ENCODE measurements at regions of chr17 and their contacts with region 1.

Region 1: GRCh38 chr17:19766422-19767270 is 18.5 kb upstream of the ALDH3A1 start:
- DNase-seq: peak; percentile 54 to 88 (median 77)
- ATAC-seq: peak; percentile 93
- H3K4me3 ChIP-seq: no peak overlapping the region
- H3K4me3 Mint-ChIP-seq: peak overlapping the region in 8 of 10 donors; percentile 25 to 73 (median 59)
- H3K27ac ChIP-seq: peak overlapping the region; percentile 33
- H3K27ac Mint-ChIP-seq: peak overlapping the region; percentile 50 to 99 (median 87)
- H3K4me1 ChIP-seq: peaks cover 5 to 43% of the 10 kb centered on the region in 2 donors
- H3K4me1 Mint-ChIP-seq: peaks cover 22 to 63% (median 46%) of the 10 kb centered on the region in 7 donors
- H3K27me3 ChIP-seq: no peaks in the 10 kb centered on the region
- H3K27me3 Mint-ChIP-seq: peaks cover 0 to 3% (median 0%) of the 10 kb centered on the region in 5 donors

Region 2: DNA sequence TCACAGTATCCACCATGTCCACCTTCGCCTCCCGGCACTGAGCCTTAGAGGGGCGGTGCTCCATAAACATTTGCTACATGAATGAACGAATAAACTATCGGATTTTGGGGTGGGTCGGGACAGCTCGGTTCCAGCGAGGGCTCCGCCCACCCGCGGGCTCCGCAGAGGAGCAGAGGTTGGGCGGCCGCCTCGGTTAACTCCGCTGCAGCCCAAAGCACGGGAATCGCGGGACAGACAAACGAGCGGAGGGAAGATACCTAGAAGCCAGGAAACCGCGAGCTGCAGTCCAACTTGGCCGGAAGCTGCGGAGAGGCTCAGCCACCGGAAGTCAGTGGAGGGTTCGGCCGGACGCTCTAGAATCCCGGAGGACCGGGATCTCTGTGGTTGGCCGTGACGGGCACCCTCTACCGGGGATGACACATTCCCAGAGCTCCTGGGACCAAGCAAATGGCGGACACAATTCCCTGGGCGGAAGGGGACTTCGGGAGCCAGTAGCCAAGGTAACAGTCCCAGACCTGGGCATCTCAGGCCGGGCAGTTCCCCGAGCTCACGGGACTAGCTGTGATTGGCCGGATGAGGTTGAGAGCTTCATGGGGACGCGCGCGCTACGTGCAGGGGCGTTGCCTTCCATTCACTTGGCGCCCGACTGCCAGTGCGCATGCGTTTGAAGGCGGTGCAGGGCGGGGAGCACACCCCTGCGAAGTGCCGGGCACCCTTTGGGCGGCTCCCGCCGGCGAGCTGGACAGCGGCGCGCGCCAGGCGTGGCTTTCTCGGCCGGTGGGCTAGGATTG is 388.8 kb before region 1 on chr17:
- CTCF ChIA-PET with region 1: interaction called, 6 read pairs
- POLR2A ChIA-PET with region 1: no interaction called
- intact Hi-C with region 1: loop called in 1 of 2 experiments (anchors 5 kb)
- DNase-seq: peak; percentile 85 to 95 (median 92)
- ATAC-seq: peak; percentile 89
- H3K4me3 ChIP-seq: peak overlapping the region; percentile 99
- H3K4me3 Mint-ChIP-seq: peak overlapping the region; percentile 83 to 100 (median 97)
- H3K27ac ChIP-seq: peak overlapping the region; percentile 81
- H3K27ac Mint-ChIP-seq: peak overlapping the region; percentile 83 to 99 (median 97)
- H3K4me1 ChIP-seq: peaks cover 2 to 6% of the 10 kb centered on the region in 2 donors
- H3K4me1 Mint-ChIP-seq: peaks cover 6 to 29% (median 20%) of the 10 kb centered on the region in 7 donors
- H3K27me3 ChIP-seq: no peaks in the 10 kb centered on the region
- H3K27me3 Mint-ChIP-seq: no peaks in the 10 kb centered on the region

Region 3: GRCh38 chr17:19464031-19465026 is 302.3 kb before region 1 on chr17:
- CTCF ChIA-PET with region 1: interaction called, 3 read pairs
- POLR2A ChIA-PET with region 1: interaction called, 4 read pairs
- intact Hi-C with region 1: loop called in 1 of 2 experiments (anchors 5 kb)
- DNase-seq: no peak
- ATAC-seq: no peak
- H3K4me3 ChIP-seq: no peak overlapping the region
- H3K4me3 Mint-ChIP-seq: peak overlapping the region in 8 of 10 donors; percentile 54 to 83 (median 62)
- H3K27ac ChIP-seq: peak overlapping the region; percentile 48
- H3K27ac Mint-ChIP-seq: peak overlapping the region in 8 of 9 donors; percentile 72 to 96 (median 86)
- H3K4me1 ChIP-seq: peaks cover 25 to 48% of the 10 kb centered on the region in 2 donors
- H3K4me1 Mint-ChIP-seq: peaks cover 17 to 55% (median 44%) of the 10 kb centered on the region in 7 donors
- H3K27me3 ChIP-seq: no peaks in the 10 kb centered on the region
- H3K27me3 Mint-ChIP-seq: no peaks in the 10 kb centered on the region

Region 4: DNA sequence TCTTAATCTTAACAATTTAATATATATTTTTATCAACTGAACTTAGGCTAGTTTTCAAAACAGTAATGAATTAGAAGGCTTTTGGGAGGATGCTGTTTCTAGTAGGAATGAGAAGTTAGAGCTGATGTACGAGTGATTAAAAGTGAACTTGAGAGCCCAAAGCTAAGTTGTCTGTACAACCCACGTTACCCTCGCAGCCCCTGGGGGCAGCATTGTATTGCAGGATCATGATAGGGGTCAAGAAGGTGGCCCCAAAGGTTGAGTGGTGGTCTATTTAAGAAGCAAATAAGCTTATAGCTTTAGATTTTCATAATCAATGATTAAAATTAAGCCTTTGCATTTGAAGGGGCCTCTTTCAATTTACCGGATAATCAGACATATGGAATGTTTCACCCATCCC is 151.7 kb before region 1 on chr17:
- CTCF ChIA-PET with region 1: interaction called, 4 read pairs
- POLR2A ChIA-PET with region 1: no interaction called
- intact Hi-C with region 1: loop called in 1 of 2 experiments (anchors 1 kb)
- DNase-seq: no peak
- ATAC-seq: no peak
- H3K4me3 ChIP-seq: no peak overlapping the region
- H3K4me3 Mint-ChIP-seq: no peak overlapping the region
- H3K27ac ChIP-seq: no peak overlapping the region
- H3K27ac Mint-ChIP-seq: no peak overlapping the region
- H3K4me1 ChIP-seq: no peaks in the 10 kb centered on the region
- H3K4me1 Mint-ChIP-seq: peaks cover 4 to 11% (median 7%) of the 10 kb centered on the region in 7 donors
- H3K27me3 ChIP-seq: no peaks in the 10 kb centered on the region
- H3K27me3 Mint-ChIP-seq: peaks cover 0 to 5% (median 0%) of the 10 kb centered on the region in 5 donors

Region 5: DNA sequence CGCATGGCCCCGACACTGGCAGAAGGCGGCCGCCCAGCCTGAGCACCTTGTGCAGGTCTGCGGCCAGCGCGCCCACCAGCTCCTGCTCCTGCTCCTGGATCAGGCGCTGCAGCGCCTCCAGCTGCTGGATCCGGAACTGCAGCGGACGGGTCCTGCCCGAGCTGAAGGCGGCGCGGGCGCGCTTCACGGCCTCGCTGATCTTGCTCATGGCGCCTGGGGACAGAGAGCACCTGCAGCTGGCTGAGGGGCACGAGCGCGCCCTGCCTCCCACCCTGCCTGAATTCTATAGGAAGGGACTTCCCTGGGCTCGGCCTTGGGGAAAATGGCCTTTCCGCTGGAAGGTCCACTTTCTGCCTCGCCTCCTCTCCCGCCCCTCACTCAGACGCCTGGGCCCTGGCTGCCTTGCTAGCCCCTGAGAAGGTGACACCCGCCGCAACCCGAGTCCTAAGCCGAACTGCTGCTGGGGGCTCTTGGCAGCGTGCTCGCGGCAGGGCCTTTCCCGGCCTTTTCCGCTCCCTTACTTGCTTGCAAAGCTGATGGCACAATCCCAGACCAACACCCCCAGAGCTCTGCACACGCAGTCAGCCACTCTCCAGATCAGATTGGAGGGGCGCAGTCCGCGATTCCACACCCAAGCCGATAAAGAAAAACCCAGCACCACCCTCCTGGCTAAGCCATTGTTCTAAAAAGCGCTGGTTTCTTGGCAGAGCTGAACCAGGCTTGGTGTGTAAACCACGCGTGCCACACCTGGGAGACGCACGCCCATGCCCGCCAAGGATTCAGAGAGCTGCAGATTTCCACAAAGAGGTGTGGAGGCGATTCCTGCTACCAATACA is 21.5 kb before region 1 on chr17:
- CTCF ChIA-PET with region 1: interaction called, 11 read pairs
- POLR2A ChIA-PET with region 1: no interaction called
- intact Hi-C with region 1: loop called in 1 of 2 experiments (anchors 2 kb)
- DNase-seq: peak; percentile 73 to 91 (median 84)
- ATAC-seq: peak; percentile 95
- H3K4me3 ChIP-seq: peak overlapping the region; percentile 27
- H3K4me3 Mint-ChIP-seq: peak overlapping the region; percentile 36 to 78 (median 66)
- H3K27ac ChIP-seq: no peak overlapping the region
- H3K27ac Mint-ChIP-seq: peak overlapping the region in 2 of 9 donors; percentile 40 to 67
- H3K4me1 ChIP-seq: peaks cover 0 to 5% of the 10 kb centered on the region in 2 donors
- H3K4me1 Mint-ChIP-seq: peaks cover 0 to 10% (median 0%) of the 10 kb centered on the region in 7 donors
- H3K27me3 ChIP-seq: no peaks in the 10 kb centered on the region
- H3K27me3 Mint-ChIP-seq: peaks cover 0 to 7% (median 0%) of the 10 kb centered on the region in 5 donors

Region 6: DNA sequence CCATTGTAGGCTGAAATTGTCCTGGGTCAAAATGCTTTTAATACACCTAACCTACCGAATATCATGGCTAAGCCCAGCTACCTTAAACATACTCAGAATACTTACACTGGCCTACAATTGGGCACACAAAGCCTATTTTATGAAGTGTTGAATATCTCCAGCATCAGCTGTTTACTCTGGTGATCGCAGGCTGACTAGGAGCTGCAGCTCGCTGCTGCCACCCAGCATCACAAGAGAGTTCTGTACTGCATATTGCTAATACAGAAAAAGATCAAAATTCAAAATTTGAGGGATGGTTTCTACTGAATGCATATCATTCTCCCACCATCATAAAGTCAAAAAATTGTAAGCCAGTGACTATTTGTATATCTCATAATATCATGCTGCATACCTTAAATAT is 45.8 kb after region 1 on chr17:
- CTCF ChIA-PET with region 1: interaction called, 11 read pairs
- POLR2A ChIA-PET with region 1: interaction called, 3 read pairs
- intact Hi-C with region 1: loop called in 1 of 2 experiments (anchors 1 kb)
- DNase-seq: peak in 6 of 9 donors; percentile 2 to 41 (median 29)
- ATAC-seq: peak; percentile 38
- H3K4me3 ChIP-seq: no peak overlapping the region
- H3K4me3 Mint-ChIP-seq: no peak overlapping the region
- H3K27ac ChIP-seq: no peak overlapping the region
- H3K27ac Mint-ChIP-seq: peak overlapping the region in 2 of 9 donors; percentile 18 to 50
- H3K4me1 ChIP-seq: no peaks in the 10 kb centered on the region
- H3K4me1 Mint-ChIP-seq: peaks cover 0 to 9% (median 3%) of the 10 kb centered on the region in 7 donors
- H3K27me3 ChIP-seq: no peaks in the 10 kb centered on the region
- H3K27me3 Mint-ChIP-seq: no peaks in the 10 kb centered on the region

Region 7: GRCh38 chr17:20046629-20047028 is 280.0 kb after region 1 on chr17:
- CTCF ChIA-PET with region 1: no interaction called
- POLR2A ChIA-PET with region 1: no interaction called
- intact Hi-C with region 1: no loop called
- DNase-seq: no peak
- ATAC-seq: no peak
- H3K4me3 ChIP-seq: no peak overlapping the region
- H3K4me3 Mint-ChIP-seq: no peak overlapping the region
- H3K27ac ChIP-seq: no peak overlapping the region
- H3K27ac Mint-ChIP-seq: no peak overlapping the region
- H3K4me1 ChIP-seq: peaks cover 0 to 20% of the 10 kb centered on the region in 2 donors
- H3K4me1 Mint-ChIP-seq: peaks cover 0 to 14% (median 0%) of the 10 kb centered on the region in 7 donors
- H3K27me3 ChIP-seq: no peaks in the 10 kb centered on the region
- H3K27me3 Mint-ChIP-seq: peaks cover 0 to 18% (median 7%) of the 10 kb centered on the region in 5 donors